T-cell (primary cell): ENCODE measurements at regions of chr5 and their contacts with region 1.

Region 1: GRCh38 chr5:175290379-175290778 is 153.6 kb downstream of the DRD1 start:
- DNase-seq: no peak
- ATAC-seq: no peak
- H3K4me3 ChIP-seq: no peak overlapping the region
- H3K4me3 Mint-ChIP-seq: no peak overlapping the region
- H3K27ac ChIP-seq: no peak overlapping the region
- H3K27ac Mint-ChIP-seq: no peak overlapping the region
- H3K4me1 ChIP-seq: no peaks in the 10 kb centered on the region
- H3K4me1 Mint-ChIP-seq: no peaks in the 10 kb centered on the region
- H3K27me3 ChIP-seq: peaks cover 0 to 8% of the 10 kb centered on the region in 2 experiments
- H3K27me3 Mint-ChIP-seq: peaks cover 8 to 9% of the 10 kb centered on the region in 2 donors

Region 2: DNA sequence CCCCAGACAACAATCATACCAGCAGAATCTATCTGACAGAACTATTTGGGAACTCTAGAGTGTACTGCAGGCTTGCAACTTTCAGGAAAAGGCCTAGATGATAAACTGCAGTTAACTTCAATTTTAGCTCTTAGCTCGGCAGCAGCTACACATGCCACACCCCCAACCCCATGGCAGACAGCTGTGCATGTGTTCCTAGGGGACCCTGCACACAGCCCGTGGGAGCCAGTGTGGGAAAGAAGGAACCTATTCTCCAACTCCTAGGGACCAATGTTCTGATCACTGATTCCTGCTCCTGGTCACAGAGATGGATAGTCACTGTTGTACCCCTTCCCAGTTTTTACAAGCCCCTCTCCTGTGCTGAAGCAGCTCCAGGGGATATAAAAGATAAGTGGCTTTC is 26.0 kb before region 1 on chr5:
- CTCF ChIA-PET with region 1: no interaction called
- POLR2A ChIA-PET with region 1: no interaction called
- DNase-seq: no peak
- ATAC-seq: no peak
- H3K4me3 ChIP-seq: no peak overlapping the region
- H3K4me3 Mint-ChIP-seq: no peak overlapping the region
- H3K27ac ChIP-seq: no peak overlapping the region
- H3K27ac Mint-ChIP-seq: no peak overlapping the region
- H3K4me1 ChIP-seq: no peaks in the 10 kb centered on the region
- H3K4me1 Mint-ChIP-seq: no peaks in the 10 kb centered on the region
- H3K27me3 ChIP-seq: peaks cover 0 to 6% of the 10 kb centered on the region in 2 experiments
- H3K27me3 Mint-ChIP-seq: peaks cover 10 to 28% of the 10 kb centered on the region in 2 donors

Region 3: DNA sequence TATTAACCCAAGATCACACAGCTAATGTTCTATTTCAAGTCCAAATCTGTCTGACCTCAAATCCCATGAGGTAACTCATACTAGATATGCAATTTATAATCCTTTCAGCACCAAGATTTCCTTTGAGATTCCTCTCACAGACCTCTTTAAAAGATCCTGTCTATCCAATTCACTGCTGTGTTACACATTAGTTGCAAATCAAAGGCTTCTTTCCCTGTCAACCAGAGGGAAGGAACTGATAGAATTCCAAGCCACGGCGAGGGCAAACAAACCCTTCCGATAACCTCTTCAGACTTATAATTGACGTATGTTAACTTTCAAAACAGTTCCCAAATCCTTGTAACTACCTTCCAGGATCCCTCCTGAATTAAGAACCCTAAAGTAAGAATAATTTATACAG is 15.3 kb before region 1 on chr5:
- CTCF ChIA-PET with region 1: no interaction called
- POLR2A ChIA-PET with region 1: no interaction called
- DNase-seq: no peak
- ATAC-seq: no peak
- H3K4me3 ChIP-seq: no peak overlapping the region
- H3K4me3 Mint-ChIP-seq: no peak overlapping the region
- H3K27ac ChIP-seq: no peak overlapping the region
- H3K27ac Mint-ChIP-seq: no peak overlapping the region
- H3K4me1 ChIP-seq: no peaks in the 10 kb centered on the region
- H3K4me1 Mint-ChIP-seq: no peaks in the 10 kb centered on the region
- H3K27me3 ChIP-seq: peaks cover 0 to 2% of the 10 kb centered on the region in 2 experiments
- H3K27me3 Mint-ChIP-seq: peaks cover 7 to 30% of the 10 kb centered on the region in 2 donors

Region 4: DNA sequence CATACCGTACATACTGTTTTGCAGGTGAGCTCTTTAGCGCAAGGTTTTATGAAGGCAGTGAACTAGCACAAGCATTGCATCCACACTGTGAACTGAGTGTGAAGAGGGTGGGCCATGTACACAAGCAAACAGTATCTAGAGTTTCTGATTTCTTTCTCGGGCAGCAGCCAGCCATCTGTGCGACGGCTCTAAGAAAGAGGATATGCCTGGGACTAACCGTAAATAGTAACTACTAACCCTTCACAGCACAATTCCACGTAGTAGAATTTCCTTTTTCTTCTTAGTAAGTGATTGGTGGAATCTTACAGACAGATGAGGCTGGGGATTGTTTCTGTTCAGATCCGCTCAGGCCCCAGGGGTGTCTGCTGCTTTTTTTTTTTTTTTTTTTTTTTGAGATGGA is 64.6 kb after region 1 on chr5:
- CTCF ChIA-PET with region 1: no interaction called
- POLR2A ChIA-PET with region 1: interaction called in 1 of 2 experiments, 11 read pairs
- DNase-seq: no peak
- ATAC-seq: no peak
- H3K4me3 ChIP-seq: no peak overlapping the region
- H3K4me3 Mint-ChIP-seq: no peak overlapping the region
- H3K27ac ChIP-seq: no peak overlapping the region
- H3K27ac Mint-ChIP-seq: no peak overlapping the region
- H3K4me1 ChIP-seq: no peaks in the 10 kb centered on the region
- H3K4me1 Mint-ChIP-seq: no peaks in the 10 kb centered on the region
- H3K27me3 ChIP-seq: peaks cover 0 to 23% of the 10 kb centered on the region in 2 experiments
- H3K27me3 Mint-ChIP-seq: peaks cover 20 to 33% of the 10 kb centered on the region in 2 donors